K562 (cell line): ENCODE measurements at regions of chr2 and their contacts with region 1.

Region 1: DNA sequence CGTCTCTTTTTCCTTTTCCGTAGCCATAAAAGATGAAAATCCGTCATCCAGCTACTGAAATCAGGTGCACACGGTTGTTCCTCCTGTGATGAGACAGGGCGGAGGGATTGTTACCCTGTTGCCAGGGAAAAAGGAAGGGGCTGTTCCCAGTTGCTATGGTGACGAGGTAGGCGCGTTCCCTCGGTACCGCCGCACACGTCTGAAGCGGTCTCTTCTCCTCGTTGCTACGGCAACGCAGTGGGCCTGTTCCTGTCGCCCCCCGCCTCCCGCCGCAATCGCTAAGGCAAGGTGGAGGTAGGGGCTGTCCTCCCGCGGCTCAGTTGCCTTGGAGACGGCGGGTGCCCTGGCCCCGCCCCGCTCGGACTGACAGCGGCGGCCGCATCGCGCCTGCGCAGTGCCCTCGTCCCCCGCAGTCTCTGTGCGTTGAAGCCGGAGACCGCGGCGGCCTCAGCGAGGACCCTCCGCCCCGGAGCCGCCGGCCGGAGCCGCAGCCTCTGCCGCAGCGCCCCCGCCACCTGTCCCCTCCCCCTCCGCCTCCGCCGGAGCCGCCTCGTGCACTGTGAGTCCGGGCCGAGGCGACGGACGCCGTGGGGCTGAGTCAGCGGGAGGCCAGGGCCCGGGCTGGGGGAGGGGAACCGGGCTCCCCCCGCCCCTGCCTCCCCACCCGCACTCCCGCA is at the start of gene MAPRE3:
- DNase-seq: peak; percentile 86 to 97 (median 94)
- ATAC-seq: peak; percentile 85
- H3K4me3 ChIP-seq: peak within 1 kb of the TSS; percentile 72
- H3K27ac ChIP-seq: peak within 1 kb of the TSS; percentile 82
- H3K4me1 ChIP-seq: peaks cover 26 to 34% of the 10 kb centered on the region in 2 experiments; a peak in 4 of 5 replicates
- H3K27me3 ChIP-seq: peaks cover 5% of the 10 kb centered on the region in 2 experiments; a peak in 1 of 5 replicates
- CTCF ChIP-seq: no peak
- EP300 ChIP-seq: no peak
- POLR2A ChIP-seq: no peak
- RAD21 ChIP-seq: no peak
- polyA plus RNA-seq, gene MAPRE3: 0.70 to 1.1 TPM

Region 2: GRCh38 chr2:26982102-26982742 is 11.8 kb after region 1 on chr2:
- CTCF ChIA-PET with region 1: no interaction called
- POLR2A ChIA-PET with region 1: interaction called, 13 read pairs
- in situ Hi-C with region 1: no loop called
- intact Hi-C with region 1: no loop called
- DNase-seq: peak; percentile 53 to 78 (median 66)
- ATAC-seq: peak; percentile 95
- H3K4me3 ChIP-seq: no peak overlapping the region
- H3K27ac ChIP-seq: peak overlapping the region; percentile 29; the same call in 2 of the 3 replicates
- H3K4me1 ChIP-seq: peaks cover 9 to 39% of the 10 kb centered on the region in 2 experiments
- H3K27me3 ChIP-seq: no peaks in the 10 kb centered on the region
- CTCF ChIP-seq: peak; percentile 30 to 50 (median 46); a peak in 5 of 6 replicates
- EP300 ChIP-seq: no peak
- POLR2A ChIP-seq: no peak
- RAD21 ChIP-seq: peak in 1 of 2 experiments; percentile 35; a peak in 2 of 4 replicates

Region 3: GRCh38 chr2:27003857-27004256 is 33.5 kb after region 1 on chr2:
- CTCF ChIA-PET with region 1: no interaction called
- POLR2A ChIA-PET with region 1: interaction called, 5 read pairs
- in situ Hi-C with region 1: no loop called
- intact Hi-C with region 1: loop called (anchors 2 kb)
- DNase-seq: no peak
- ATAC-seq: no peak
- H3K4me3 ChIP-seq: no peak overlapping the region
- H3K27ac ChIP-seq: peak overlapping the region; percentile 42
- H3K4me1 ChIP-seq: peaks cover 32 to 88% of the 10 kb centered on the region in 2 experiments
- H3K27me3 ChIP-seq: no peaks in the 10 kb centered on the region
- CTCF ChIP-seq: no peak
- EP300 ChIP-seq: no peak
- POLR2A ChIP-seq: no peak
- RAD21 ChIP-seq: no peak

Region 4: GRCh38 chr2:27291865-27292264 is 321.5 kb after region 1 on chr2:
- CTCF ChIA-PET with region 1: no interaction called
- POLR2A ChIA-PET with region 1: no interaction called
- in situ Hi-C with region 1: no loop called
- intact Hi-C with region 1: loop called (anchors 10 kb)
- DNase-seq: peak in 2 of 4 experiments; percentile 59 to 61
- ATAC-seq: peak; percentile 88
- H3K4me3 ChIP-seq: no peak overlapping the region
- H3K27ac ChIP-seq: no peak overlapping the region
- H3K4me1 ChIP-seq: peaks cover 4 to 12% of the 10 kb centered on the region in 2 experiments
- H3K27me3 ChIP-seq: no peaks in the 10 kb centered on the region
- CTCF ChIP-seq: peak; percentile 57 to 64 (median 58)
- EP300 ChIP-seq: no peak
- POLR2A ChIP-seq: no peak
- RAD21 ChIP-seq: peak; percentile 53 to 83